K562 (cell line): ENCODE measurements at regions of chr21 and their contacts with region 1.

Region 1: GRCh38 chr21:42117229-42117966 is 46.3 kb downstream of the UMODL1 start:
- DNase-seq: peak; percentile 79 to 88 (median 85)
- ATAC-seq: peak; percentile 94
- H3K4me3 ChIP-seq: no peak overlapping the region
- H3K27ac ChIP-seq: no peak overlapping the region
- H3K4me1 ChIP-seq: peaks cover 0 to 4% of the 10 kb centered on the region in 2 experiments; a peak in 2 of 5 replicates
- H3K27me3 ChIP-seq: peaks cover 27 to 71% of the 10 kb centered on the region in 2 experiments; a peak in 4 of 5 replicates
- CTCF ChIP-seq: peak; percentile 87 to 93 (median 93)
- EP300 ChIP-seq: no peak
- POLR2A ChIP-seq: no peak
- RAD21 ChIP-seq: peak; percentile 75 to 90

Region 2: DNA sequence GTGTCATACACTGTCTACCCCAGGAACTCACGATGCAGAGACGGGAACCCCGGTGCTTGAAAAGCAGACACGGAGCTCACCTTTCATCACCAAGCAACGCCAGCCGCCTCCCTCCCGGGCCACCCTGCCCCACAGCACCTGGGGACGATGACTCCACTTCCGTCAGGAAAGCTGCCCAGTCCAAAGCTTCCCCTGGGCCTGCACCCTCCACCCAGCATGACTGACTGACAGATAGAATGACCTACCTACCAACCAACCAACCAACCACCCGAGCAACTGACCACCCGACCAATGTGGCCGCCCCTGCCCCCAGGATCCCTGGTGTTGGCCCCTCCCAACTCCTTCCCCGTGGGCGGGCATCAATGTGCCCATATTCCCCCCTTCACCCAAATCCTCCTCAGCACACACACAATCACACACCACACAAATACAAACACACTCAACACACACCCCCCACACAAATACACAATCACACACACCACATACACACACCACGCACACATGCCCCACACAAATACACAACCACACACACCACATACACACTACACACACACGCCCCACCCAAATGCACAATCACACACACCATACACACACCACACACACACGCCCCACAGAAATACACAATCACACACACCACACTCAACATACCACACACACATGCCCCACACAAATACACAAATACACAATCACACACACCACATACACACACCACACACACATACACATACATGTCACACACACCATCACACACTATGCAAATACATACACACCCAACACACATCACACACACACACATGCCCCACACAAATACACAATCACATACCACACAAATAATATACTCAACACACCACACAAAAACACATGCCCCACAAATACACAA is 288.7 kb before region 1 on chr21:
- CTCF ChIA-PET with region 1: no interaction called
- POLR2A ChIA-PET with region 1: no interaction called
- in situ Hi-C with region 1: loop called (anchors 10 kb)
- intact Hi-C with region 1: no loop called
- DNase-seq: peak in 1 of 4 experiments; percentile 28
- ATAC-seq: no peak
- H3K4me3 ChIP-seq: no peak overlapping the region
- H3K27ac ChIP-seq: no peak overlapping the region
- H3K4me1 ChIP-seq: peaks cover 0 to 3% of the 10 kb centered on the region in 2 experiments; a peak in 1 of 5 replicates
- H3K27me3 ChIP-seq: no peaks in the 10 kb centered on the region
- CTCF ChIP-seq: no peak
- EP300 ChIP-seq: no peak
- POLR2A ChIP-seq: no peak
- RAD21 ChIP-seq: no peak

Region 3: GRCh38 chr21:41895643-41896493 is 221.5 kb before region 1 on chr21:
- CTCF ChIA-PET with region 1: no interaction called
- POLR2A ChIA-PET with region 1: no interaction called
- in situ Hi-C with region 1: no loop called
- intact Hi-C with region 1: no loop called
- DNase-seq: peak; percentile 45 to 67 (median 54)
- ATAC-seq: peak; percentile 70
- H3K4me3 ChIP-seq: no peak overlapping the region
- H3K27ac ChIP-seq: peak overlapping the region; percentile 54
- H3K4me1 ChIP-seq: peaks cover 19 to 24% of the 10 kb centered on the region in 2 experiments
- H3K27me3 ChIP-seq: no peaks in the 10 kb centered on the region
- CTCF ChIP-seq: peak in 2 of 3 experiments; percentile 8 to 25; a peak in 1 of 6 replicates
- EP300 ChIP-seq: no peak
- POLR2A ChIP-seq: no peak
- RAD21 ChIP-seq: no peak